Ascending aorta (tissue), 2 donors: ENCODE measurements at regions of chrX and their contacts with region 1.

Region 1: DNA sequence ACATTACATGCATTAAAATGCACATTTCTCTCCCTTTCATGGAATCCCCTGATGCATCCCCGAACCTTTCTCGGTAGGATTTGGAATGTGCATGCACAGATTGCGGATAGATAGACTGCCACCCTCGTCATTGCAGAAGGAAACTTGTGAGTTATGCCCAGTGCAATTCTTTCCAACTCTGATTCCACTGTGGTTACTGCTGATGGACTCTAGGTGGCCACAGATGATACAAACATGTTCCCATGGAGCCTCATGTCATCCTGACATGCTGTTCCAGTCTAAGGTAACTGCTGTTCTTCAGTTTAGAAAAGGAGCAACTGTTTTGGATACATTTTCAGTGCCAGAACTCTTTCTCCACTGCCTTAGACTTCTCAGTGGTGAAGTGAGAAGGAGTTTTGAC is 9.1 kb upstream of the VCX3B start:
- DNase-seq: no peak
- H3K4me3 ChIP-seq: no peak overlapping the region
- H3K27ac ChIP-seq: no peak overlapping the region
- H3K4me1 ChIP-seq: no peaks in the 10 kb centered on the region
- H3K27me3 ChIP-seq: no peaks in the 10 kb centered on the region
- CTCF ChIP-seq: peak in 1 of 3 experiments; percentile 11

Region 2: GRCh38 chrX:8377041-8377440 is 78.5 kb before region 1 on chrX:
- intact Hi-C with region 1: loop called (anchors 10 kb)
- DNase-seq: no peak
- H3K4me3 ChIP-seq: no peak overlapping the region
- H3K27ac ChIP-seq: no peak overlapping the region
- H3K4me1 ChIP-seq: no peaks in the 10 kb centered on the region
- H3K27me3 ChIP-seq: no peaks in the 10 kb centered on the region
- CTCF ChIP-seq: no peak